Caco-2 (cell line): ENCODE measurements at regions of chr12 and their contacts with region 1.

Region 1: DNA sequence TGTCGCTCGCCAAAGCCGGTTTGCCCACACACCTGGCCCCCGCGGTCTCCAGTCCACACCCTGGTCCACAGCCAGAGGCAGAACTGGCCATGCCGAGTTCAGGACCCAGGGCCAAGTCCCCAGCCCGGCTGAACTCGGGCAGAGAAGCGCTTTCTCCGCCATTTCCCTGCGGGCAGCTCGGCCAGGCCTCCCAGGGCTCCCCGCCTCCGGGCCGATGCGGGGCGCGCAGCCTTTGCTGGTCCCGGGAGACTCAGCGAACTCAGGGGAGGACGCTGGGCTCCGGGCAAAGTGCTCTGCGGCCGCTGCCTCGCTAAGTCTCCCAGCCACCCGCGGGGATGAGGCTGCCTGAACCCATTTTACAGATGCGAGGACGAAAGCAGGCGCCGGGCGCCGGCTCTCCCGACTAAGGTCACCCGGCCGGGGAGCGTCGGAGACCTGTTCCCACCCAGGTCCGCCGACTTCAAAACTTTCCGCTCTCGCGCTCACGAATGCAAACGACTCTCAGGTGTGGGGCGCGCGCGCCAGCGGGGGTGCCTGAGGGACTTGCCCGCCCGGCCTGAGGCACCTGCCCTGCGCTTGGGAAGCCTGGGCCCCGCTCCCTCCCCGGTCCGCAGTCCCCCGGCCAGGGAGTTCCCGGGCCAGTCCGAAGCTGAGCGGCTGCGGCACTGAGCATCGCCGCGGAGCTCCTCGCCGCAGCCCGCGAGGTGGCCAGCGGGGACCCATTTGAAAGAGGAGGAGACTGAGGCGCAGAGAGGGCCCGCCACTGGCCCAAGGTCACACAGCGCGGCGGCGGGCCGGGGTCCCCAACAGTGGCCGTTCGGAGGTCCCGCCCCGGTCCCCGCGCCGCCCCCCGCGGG is 627 bp downstream of the TESC start:
- DNase-seq: peak in 1 of 2 experiments; percentile 26
- H3K4me3 ChIP-seq: peak overlapping the region; percentile 51
- H3K4me3 Mint-ChIP-seq: peak overlapping the region; percentile 64
- H3K27ac Mint-ChIP-seq: no peak overlapping the region
- H3K4me1 ChIP-seq: peaks cover 6% of the 10 kb centered on the region; the same call in 1 of the 2 replicates
- H3K4me1 Mint-ChIP-seq: no peaks in the 10 kb centered on the region
- H3K27me3 ChIP-seq: no peaks in the 10 kb centered on the region
- H3K27me3 Mint-ChIP-seq: peaks cover 6% of the 10 kb centered on the region
- CTCF ChIP-seq: no peak

Region 2: DNA sequence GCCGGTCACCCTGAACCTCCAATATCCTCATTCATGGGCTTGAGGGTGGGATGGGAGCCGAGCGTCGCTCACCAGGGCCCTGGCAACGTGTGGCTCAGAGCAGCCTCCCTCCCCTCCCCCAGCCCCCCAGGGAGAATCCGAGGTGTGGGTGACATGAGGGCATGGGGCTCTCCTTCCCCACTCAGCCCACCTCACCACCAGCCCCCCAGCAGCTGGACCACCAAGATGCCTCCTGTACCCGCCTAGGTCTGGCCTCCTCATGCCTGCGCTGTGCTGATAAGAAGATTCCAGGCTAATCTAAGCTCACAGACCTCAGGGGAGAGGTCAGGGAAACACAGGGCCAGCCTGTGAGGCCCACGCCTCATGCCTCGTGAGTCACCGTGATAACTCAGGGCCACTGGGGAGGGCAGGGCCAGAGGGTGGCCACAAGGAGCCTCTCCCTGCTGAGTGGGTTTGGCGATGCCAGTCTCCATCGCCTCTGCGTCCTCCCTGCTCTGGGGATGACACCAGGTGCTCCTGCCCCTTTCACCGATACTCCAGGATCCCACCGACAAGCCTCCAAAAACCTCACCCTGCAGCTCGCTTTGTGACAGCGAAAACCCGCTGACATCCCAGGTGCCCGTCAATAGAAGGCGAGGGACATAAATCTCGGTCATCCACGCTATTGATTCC is 56.3 kb before region 1 on chr12:
- CTCF ChIA-PET with region 1: interaction called, 3 read pairs
- POLR2A ChIA-PET with region 1: no interaction called
- intact Hi-C with region 1: loop called (anchors 5 kb)
- DNase-seq: peak; percentile 84 to 91
- H3K4me3 ChIP-seq: no peak overlapping the region
- H3K4me3 Mint-ChIP-seq: peak overlapping the region; percentile 40
- H3K27ac Mint-ChIP-seq: peak overlapping the region; percentile 85
- H3K4me1 ChIP-seq: peaks cover 54% of the 10 kb centered on the region
- H3K4me1 Mint-ChIP-seq: peaks cover 20% of the 10 kb centered on the region
- H3K27me3 ChIP-seq: no peaks in the 10 kb centered on the region
- H3K27me3 Mint-ChIP-seq: no peaks in the 10 kb centered on the region
- CTCF ChIP-seq: no peak

Region 3: GRCh38 chr12:117119592-117120198 is 21.1 kb after region 1 on chr12:
- CTCF ChIA-PET with region 1: interaction called, 17 read pairs
- POLR2A ChIA-PET with region 1: no interaction called
- intact Hi-C with region 1: loop called (anchors 1 kb)
- DNase-seq: peak; percentile 40 to 56
- H3K4me3 ChIP-seq: no peak overlapping the region
- H3K4me3 Mint-ChIP-seq: no peak overlapping the region
- H3K27ac Mint-ChIP-seq: peak overlapping the region; percentile 75
- H3K4me1 ChIP-seq: peaks cover 20% of the 10 kb centered on the region
- H3K4me1 Mint-ChIP-seq: peaks cover 10% of the 10 kb centered on the region
- H3K27me3 ChIP-seq: no peaks in the 10 kb centered on the region
- H3K27me3 Mint-ChIP-seq: no peaks in the 10 kb centered on the region
- CTCF ChIP-seq: peak; percentile 56 to 61

Region 4: DNA sequence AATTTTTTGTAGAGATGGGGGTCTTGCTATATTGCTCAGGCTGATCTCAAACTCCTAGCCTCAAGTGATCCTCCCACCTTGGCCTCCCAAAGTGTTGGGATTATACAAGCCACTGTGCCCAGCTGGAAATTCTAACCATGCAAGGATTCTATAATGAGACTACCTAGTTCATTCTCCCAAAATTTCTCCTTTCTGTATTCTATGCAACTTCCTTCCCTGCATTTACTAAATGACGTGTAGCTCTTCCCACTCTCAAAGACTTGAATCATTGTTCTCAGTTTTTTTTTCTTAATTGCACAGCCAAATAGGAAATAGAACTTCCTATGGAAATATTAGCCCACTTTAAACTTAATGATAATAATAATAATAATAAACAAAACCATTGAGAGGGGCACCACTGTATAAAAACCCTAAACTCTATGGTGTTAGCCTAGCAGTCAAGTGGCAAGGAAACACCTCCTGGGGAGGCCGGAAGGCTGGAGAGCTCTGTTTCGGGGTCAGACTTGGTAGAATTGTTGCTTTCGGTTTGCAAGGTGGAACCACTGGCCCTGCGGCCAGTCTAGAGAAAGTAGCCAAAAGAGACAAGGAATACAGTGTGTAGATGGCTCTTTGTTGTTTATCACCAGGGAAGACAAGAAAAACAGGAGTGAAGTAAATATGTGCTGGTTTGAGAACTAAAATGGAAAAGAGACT is 40.6 kb after region 1 on chr12:
- CTCF ChIA-PET with region 1: interaction called, 8 read pairs
- POLR2A ChIA-PET with region 1: no interaction called
- intact Hi-C with region 1: loop called (anchors 5 kb)
- DNase-seq: no peak
- H3K4me3 ChIP-seq: no peak overlapping the region
- H3K4me3 Mint-ChIP-seq: no peak overlapping the region
- H3K27ac Mint-ChIP-seq: no peak overlapping the region
- H3K4me1 ChIP-seq: peaks cover 16% of the 10 kb centered on the region
- H3K4me1 Mint-ChIP-seq: peaks cover 14% of the 10 kb centered on the region
- H3K27me3 ChIP-seq: no peaks in the 10 kb centered on the region
- H3K27me3 Mint-ChIP-seq: no peaks in the 10 kb centered on the region
- CTCF ChIP-seq: no peak